ENCODE measurements at regions of chr12 and their contacts with region 1.

Region 1: DNA sequence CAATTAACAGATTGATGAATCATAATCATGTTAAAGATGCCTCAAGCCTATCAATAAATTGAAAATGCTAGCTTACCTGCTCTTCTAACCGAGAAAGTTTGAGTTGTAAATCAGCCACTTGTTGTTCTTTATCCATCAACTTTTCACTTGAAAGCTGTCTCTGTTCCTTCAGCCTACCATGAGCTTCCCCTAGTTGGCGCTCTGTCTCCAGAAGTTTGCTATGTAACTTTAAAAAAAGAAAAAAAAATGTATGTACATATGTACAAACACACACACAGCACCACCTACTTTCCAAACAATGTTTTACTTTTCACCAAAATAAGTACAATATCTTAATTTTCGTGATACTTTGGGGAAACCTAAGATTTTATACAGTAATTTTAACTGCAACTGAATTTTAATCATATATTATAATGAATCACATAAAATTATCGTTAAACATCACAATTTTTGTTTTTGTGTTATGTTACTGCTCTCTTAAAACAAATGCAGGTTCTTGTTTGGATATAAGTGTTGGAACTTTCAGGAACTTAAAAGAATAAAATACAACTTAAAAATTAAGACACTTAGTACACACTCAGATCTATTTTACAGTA is 101.2 kb downstream of the EEA1 start:
- DNase-seq: peak in 7 of 9 donors; percentile 19 to 58 (median 37)
- ATAC-seq: peak; percentile 74
- H3K4me3 ChIP-seq: no peak overlapping the region
- H3K4me3 Mint-ChIP-seq: no peak overlapping the region
- H3K27ac ChIP-seq: no peak overlapping the region
- H3K27ac Mint-ChIP-seq: no peak overlapping the region
- H3K4me1 ChIP-seq: no peaks in the 10 kb centered on the region
- H3K4me1 Mint-ChIP-seq: peaks cover 0 to 8% (median 2%) of the 10 kb centered on the region in 7 donors
- H3K27me3 ChIP-seq: no peaks in the 10 kb centered on the region
- H3K27me3 Mint-ChIP-seq: no peaks in the 10 kb centered on the region

Region 2: DNA sequence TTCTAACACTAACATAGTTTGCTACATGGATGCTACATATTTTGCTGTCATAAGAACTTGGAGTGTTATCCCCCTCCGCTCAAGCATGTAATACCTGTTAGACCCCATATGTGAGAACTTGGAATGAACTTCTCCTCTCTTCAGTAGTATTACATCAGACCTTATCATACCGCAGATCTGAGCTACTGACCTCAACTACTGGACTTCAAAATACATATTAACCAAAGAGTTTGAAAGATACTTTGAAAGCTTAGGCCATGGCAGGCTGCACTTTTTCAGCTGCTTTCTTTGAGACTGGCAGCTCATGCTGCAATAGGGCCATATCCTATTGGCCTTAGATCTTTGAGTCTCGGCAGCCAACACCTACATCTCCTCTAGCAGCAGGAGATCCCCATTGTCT is 26.4 kb after region 1 on chr12:
- CTCF ChIA-PET with region 1: no interaction called
- POLR2A ChIA-PET with region 1: no interaction called
- intact Hi-C with region 1: loop called in 1 of 2 experiments (anchors 2 kb)
- DNase-seq: no peak
- ATAC-seq: no peak
- H3K4me3 ChIP-seq: no peak overlapping the region
- H3K4me3 Mint-ChIP-seq: no peak overlapping the region
- H3K27ac ChIP-seq: no peak overlapping the region
- H3K27ac Mint-ChIP-seq: peak overlapping the region in 3 of 9 donors; percentile 0 to 10 (median 10)
- H3K4me1 ChIP-seq: no peaks in the 10 kb centered on the region
- H3K4me1 Mint-ChIP-seq: peaks cover 0 to 16% (median 5%) of the 10 kb centered on the region in 7 donors
- H3K27me3 ChIP-seq: no peaks in the 10 kb centered on the region
- H3K27me3 Mint-ChIP-seq: no peaks in the 10 kb centered on the region

Region 3: DNA sequence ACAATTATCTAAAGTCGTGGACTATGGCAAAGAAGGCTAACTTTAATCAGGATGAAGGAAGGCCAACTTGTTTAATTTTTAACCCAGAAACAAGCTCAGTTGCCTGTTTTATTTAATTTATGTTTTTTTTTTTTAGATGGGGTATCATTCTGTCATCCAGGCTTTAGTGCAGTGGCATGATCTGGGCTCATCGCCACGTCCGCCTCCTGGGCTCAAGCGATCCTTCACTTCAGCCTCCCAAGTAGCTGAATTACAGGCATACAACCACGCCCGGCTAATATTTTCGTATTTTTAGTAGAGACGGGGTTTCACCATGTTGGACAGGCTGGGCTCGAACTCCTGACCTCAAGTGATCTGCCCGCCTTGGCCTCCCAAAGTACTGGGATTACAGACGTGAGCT is 569.5 kb after region 1 on chr12:
- CTCF ChIA-PET with region 1: interaction called, 6 read pairs
- POLR2A ChIA-PET with region 1: no interaction called
- intact Hi-C with region 1: loop called (anchors 2 to 5 kb)
- DNase-seq: no peak
- ATAC-seq: no peak
- H3K4me3 ChIP-seq: no peak overlapping the region
- H3K4me3 Mint-ChIP-seq: no peak overlapping the region
- H3K27ac ChIP-seq: no peak overlapping the region
- H3K27ac Mint-ChIP-seq: peak overlapping the region in 1 of 9 donors; percentile 25
- H3K4me1 ChIP-seq: no peaks in the 10 kb centered on the region
- H3K4me1 Mint-ChIP-seq: peaks cover 0 to 8% (median 5%) of the 10 kb centered on the region in 7 donors
- H3K27me3 ChIP-seq: no peaks in the 10 kb centered on the region
- H3K27me3 Mint-ChIP-seq: no peaks in the 10 kb centered on the region